Left lung (tissue), 14 donors: ENCODE measurements at regions of chr2 and their contacts with region 1.

Region 1: GRCh38 chr2:54899576-54900200 is 150.6 kb downstream of the RTN4 start:
- DNase-seq: peak in 2 of 4 donors; percentile 8 to 47
- ATAC-seq: peak; percentile 80
- H3K4me3 ChIP-seq: no peak overlapping the region
- H3K27ac ChIP-seq: no peak overlapping the region
- H3K4me1 ChIP-seq: peaks cover 0 to 7% of the 10 kb centered on the region in 2 donors
- H3K27me3 ChIP-seq: no peaks in the 10 kb centered on the region
- CTCF ChIP-seq: peak; percentile 25 to 57

Region 2: DNA sequence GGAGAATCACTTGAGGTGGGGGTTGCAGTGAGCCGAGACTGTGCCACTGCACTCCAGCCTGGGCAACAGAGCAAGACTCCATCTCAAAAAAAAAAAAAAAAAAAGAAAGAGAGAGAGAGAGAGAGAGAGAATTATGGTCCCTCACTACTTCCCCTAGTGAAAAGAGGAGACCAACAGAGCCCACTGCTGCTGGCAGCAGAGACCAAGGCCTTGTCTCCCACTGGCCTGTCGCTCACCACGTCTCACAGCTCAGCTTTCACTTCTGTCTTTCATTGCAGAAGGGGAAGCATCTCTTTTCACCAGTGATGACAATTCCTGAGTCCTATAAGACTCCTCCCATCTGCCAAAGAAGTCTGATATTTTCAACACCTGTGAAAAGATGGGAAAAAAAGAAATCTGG is 251.1 kb after region 1 on chr2:
- intact Hi-C with region 1: no loop called
- DNase-seq: peak in 1 of 4 donors; percentile 60
- ATAC-seq: peak; percentile 57
- H3K4me3 ChIP-seq: no peak overlapping the region
- H3K27ac ChIP-seq: no peak overlapping the region
- H3K4me1 ChIP-seq: peaks cover 22 to 58% of the 10 kb centered on the region in 2 donors
- H3K27me3 ChIP-seq: no peaks in the 10 kb centered on the region
- CTCF ChIP-seq: no peak

Region 3: GRCh38 chr2:55175254-55176025 is 275.8 kb after region 1 on chr2:
- intact Hi-C with region 1: loop called in 1 of 2 experiments (anchors 10 kb)
- DNase-seq: peak in 1 of 4 donors; percentile 64
- ATAC-seq: peak; percentile 93
- H3K4me3 ChIP-seq: no peak overlapping the region
- H3K27ac ChIP-seq: no peak overlapping the region
- H3K4me1 ChIP-seq: peaks cover 0 to 5% of the 10 kb centered on the region in 2 donors
- H3K27me3 ChIP-seq: no peaks in the 10 kb centered on the region
- CTCF ChIP-seq: peak; percentile 49 to 50